Activated naive CD4-positive, alpha-beta T cell treated with anti-CD3 and anti-CD28 coated beads for 36 hours (primary cell): ENCODE measurements at regions of chr11 and their contacts with region 1.

Region 1: GRCh38 chr11:102940714-102941588 is 14.6 kb downstream of the MMP13 start:
- DNase-seq: peak; percentile 68
- H3K4me3 Mint-ChIP-seq: no peak overlapping the region
- H3K27ac Mint-ChIP-seq: no peak overlapping the region
- H3K4me1 Mint-ChIP-seq: peaks cover 3% of the 10 kb centered on the region
- H3K27me3 Mint-ChIP-seq: peaks cover 11% of the 10 kb centered on the region

Region 2: DNA sequence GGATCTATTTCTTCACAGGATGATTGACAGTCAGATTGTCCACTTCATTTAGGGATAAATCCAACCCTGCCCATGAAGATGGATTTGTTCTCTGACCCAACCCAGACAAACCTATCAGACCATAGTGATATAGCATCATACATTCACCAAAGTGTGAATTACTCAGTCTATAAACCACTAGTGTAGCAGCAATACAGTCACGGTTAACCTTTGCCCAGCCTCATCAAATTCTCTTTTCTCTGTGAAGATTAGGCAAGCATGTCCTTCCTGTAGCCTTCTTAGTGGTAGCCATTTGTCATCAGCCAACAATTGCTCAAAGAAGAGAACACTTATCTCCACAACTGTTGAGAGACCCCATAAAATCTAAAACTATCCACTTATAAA is 608.3 kb before region 1 on chr11:
- CTCF ChIA-PET with region 1: no interaction called
- intact Hi-C with region 1: loop called (anchors 5 kb)
- DNase-seq: no peak
- H3K4me3 Mint-ChIP-seq: no peak overlapping the region
- H3K27ac Mint-ChIP-seq: peak overlapping the region; percentile 68
- H3K4me1 Mint-ChIP-seq: peaks cover 12% of the 10 kb centered on the region
- H3K27me3 Mint-ChIP-seq: no peaks in the 10 kb centered on the region

Region 3: GRCh38 chr11:102620818-102621561 is 320.0 kb before region 1 on chr11:
- CTCF ChIA-PET with region 1: no interaction called
- intact Hi-C with region 1: no loop called
- DNase-seq: no peak
- H3K4me3 Mint-ChIP-seq: no peak overlapping the region
- H3K27ac Mint-ChIP-seq: no peak overlapping the region
- H3K4me1 Mint-ChIP-seq: no peaks in the 10 kb centered on the region
- H3K27me3 Mint-ChIP-seq: peaks cover 6% of the 10 kb centered on the region

Region 4: GRCh38 chr11:102733232-102733875 is 207.6 kb before region 1 on chr11:
- CTCF ChIA-PET with region 1: interaction called, 13 read pairs
- intact Hi-C with region 1: loop called (anchors 1 kb)
- DNase-seq: peak; percentile 77
- H3K4me3 Mint-ChIP-seq: no peak overlapping the region
- H3K27ac Mint-ChIP-seq: no peak overlapping the region
- H3K4me1 Mint-ChIP-seq: no peaks in the 10 kb centered on the region
- H3K27me3 Mint-ChIP-seq: peaks cover 4% of the 10 kb centered on the region

Region 5: GRCh38 chr11:102831489-102832440 is 109.2 kb before region 1 on chr11:
- CTCF ChIA-PET with region 1: interaction called, 3 read pairs
- intact Hi-C with region 1: loop called (anchors 1 kb)
- DNase-seq: peak; percentile 54
- H3K4me3 Mint-ChIP-seq: peak overlapping the region; percentile 19
- H3K27ac Mint-ChIP-seq: no peak overlapping the region
- H3K4me1 Mint-ChIP-seq: no peaks in the 10 kb centered on the region
- H3K27me3 Mint-ChIP-seq: peaks cover 26% of the 10 kb centered on the region

Region 6: GRCh38 chr11:102920118-102920684 is 20.8 kb before region 1 on chr11:
- CTCF ChIA-PET with region 1: interaction called, 16 read pairs
- intact Hi-C with region 1: no loop called
- DNase-seq: no peak
- H3K4me3 Mint-ChIP-seq: no peak overlapping the region
- H3K27ac Mint-ChIP-seq: no peak overlapping the region
- H3K4me1 Mint-ChIP-seq: peaks cover 5% of the 10 kb centered on the region
- H3K27me3 Mint-ChIP-seq: peaks cover 22% of the 10 kb centered on the region

Region 7: GRCh38 chr11:103035791-103036434 is 95.0 kb after region 1 on chr11:
- CTCF ChIA-PET with region 1: interaction called, 7 read pairs
- intact Hi-C with region 1: loop called (anchors 1 kb)
- DNase-seq: peak; percentile 76
- H3K4me3 Mint-ChIP-seq: peak overlapping the region; percentile 17
- H3K27ac Mint-ChIP-seq: peak overlapping the region; percentile 90
- H3K4me1 Mint-ChIP-seq: peaks cover 26% of the 10 kb centered on the region
- H3K27me3 Mint-ChIP-seq: peaks cover 4% of the 10 kb centered on the region

Region 8: DNA sequence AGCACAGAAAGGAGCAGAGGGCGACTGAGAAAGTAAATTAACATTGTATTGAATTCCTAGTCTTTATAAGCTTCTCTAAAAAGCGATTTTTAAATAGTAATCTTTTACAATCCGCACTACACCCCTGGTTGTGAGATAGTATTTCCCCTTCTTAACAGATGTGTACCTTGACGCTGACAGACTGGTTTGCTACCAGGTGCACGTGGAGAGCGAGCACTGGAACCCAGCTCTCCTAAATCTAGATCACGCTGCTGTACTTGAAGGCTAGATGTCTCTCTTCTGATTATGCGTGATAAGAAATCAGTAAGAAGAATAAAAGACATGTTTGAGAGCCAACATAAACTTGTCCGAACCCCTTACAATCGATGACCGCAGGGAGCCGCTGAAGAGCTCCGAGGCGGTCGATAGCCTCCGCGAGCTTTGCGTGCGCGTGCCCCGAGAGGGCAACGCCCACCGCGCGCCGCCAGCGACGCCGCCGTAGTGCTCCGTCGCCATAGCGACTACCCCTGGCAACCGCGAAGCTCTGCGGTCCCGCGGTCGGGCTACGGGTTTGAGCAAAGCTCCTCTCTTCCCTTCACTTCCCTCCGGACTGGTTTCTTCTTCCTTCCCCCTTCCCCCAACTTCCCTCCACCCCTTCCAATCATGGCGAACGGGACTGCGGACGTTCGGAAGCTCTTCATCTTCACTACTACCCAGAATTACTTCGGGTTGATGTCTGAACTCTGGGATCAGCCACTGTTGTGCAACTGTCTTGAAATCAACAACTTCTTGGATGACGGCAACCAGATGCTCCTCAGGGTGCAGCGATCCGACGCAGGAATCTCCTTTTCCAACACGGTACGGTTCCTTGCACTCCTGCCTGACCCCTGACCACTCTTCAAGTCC is 168.2 kb after region 1 on chr11 and contains the start of gene DYNC2H1:
- CTCF ChIA-PET with region 1: no interaction called
- intact Hi-C with region 1: loop called (anchors 1 kb)
- DNase-seq: peak; percentile 90
- H3K4me3 Mint-ChIP-seq: peak within 1 kb of the TSS; percentile 84
- H3K27ac Mint-ChIP-seq: peak within 1 kb of the TSS; percentile 72
- H3K4me1 Mint-ChIP-seq: peaks cover 7% of the 10 kb centered on the region
- H3K27me3 Mint-ChIP-seq: no peaks in the 10 kb centered on the region
- total RNA-seq, gene DYNC2H1: 1.9 to 2.8 TPM